Dorsolateral prefrontal cortex (tissue), 120 donors: ENCODE measurements at regions of chr19 and their contacts with region 1.

Region 1: GRCh38 chr19:18588611-18589379 is at the start of gene REX1BD:
- DNase-seq: peak; percentile 54 to 87 (median 74)
- H3K4me3 ChIP-seq: peak within 1 kb of the TSS; percentile 47 to 95 (median 86)
- H3K27ac ChIP-seq: peak within 1 kb of the TSS; percentile 60 to 99 (median 94)
- H3K27me3 ChIP-seq: no peaks in the 10 kb centered on the region
- CTCF ChIP-seq: peak; percentile 73 to 97 (median 92)
- total RNA-seq, gene REX1BD: 49.9 to 127 (median 88.9) TPM

Region 2: DNA sequence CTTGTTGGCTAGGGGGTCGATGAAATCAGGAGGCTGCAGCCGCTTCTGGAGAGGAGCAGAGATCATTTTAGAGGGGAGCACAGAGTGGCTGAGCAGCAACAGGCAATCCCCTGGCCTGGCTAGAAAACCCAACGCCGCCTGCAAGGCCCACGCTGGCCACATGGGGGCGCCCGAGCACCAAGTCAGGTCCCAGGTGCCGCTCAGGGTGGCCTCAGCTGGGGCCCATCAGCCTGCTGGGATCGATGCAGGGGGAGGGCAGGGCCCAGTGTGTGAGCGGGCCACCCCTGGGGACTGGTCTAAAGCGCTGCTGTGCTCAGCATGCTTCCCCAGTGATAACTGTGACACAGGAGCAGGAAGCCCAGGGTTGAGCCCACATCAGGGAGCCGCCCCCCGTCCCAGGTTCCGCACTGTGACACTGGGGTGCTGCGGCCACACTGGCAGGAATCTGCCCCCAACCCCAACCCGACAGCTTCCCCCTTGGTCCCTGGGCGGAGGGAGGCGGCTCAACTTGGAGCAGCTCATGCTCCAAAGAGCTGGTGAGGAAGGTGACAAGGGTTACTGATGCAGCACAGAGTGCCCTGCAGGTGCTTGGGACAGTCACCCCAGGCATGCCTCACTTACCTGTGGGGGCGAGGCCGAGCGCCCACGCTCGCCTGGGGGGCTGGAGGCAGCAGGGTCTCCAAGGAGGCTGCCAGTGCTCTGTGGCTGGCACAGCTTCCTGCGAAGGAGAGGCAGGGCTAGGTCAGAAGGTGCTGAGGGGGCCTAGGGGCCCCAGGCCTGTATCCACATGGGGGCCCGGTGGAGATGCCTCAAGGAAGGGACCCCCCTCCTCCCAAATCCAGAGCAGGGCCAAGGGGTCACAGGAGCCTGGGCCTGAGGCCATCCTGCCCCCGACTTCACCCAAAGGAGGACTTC is 137.6 kb before region 1 on chr19:
- intact Hi-C with region 1: loop called in 1 of 2 experiments (anchors 5 kb)
- DNase-seq: peak; percentile 82 to 97 (median 92)
- H3K4me3 ChIP-seq: peak overlapping the region in 1 of 59 donors; percentile 19
- H3K27ac ChIP-seq: peak overlapping the region in 19 of 59 donors; percentile 1 to 72 (median 36)
- H3K27me3 ChIP-seq: no peaks in the 10 kb centered on the region
- CTCF ChIP-seq: peak; percentile 91 to 99 (median 98)

Region 3: DNA sequence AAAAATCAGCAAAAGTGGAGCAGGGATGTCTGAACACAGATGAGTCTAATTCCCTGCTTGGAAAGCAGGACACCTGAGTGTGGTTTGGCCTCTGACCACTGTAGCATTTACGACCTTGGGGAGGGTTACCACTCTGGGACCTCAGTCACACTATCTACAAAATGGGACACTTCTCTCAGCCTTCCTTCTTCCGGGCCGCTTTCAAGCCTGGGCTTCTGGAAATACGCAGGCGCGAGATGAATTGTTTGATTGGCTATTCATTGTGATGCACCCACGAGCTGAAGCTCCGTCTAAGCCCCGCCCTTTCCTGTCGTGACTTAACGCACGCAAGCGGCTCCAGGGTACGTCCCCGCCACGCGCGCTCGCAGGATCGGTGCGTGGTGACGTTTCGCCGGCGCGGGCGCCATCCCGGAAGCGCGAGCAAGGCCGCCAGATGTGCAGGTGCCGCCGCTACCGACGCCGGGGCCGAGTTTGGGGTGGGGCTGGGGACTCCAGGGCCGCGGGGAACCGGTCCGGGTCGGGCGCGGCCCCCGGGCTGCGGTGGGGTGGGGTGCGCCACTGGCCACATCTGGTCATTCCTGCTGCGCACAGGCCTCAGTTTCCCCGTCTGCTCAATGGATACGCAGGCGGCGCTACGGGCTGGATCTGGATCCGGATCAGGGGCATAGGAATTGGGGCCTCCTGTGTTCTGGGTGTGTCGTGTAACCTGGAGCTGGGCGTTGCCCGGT is 31.2 kb before region 1 on chr19 and contains the start of gene KXD1:
- intact Hi-C with region 1: no loop called
- DNase-seq: peak; percentile 94 to 99 (median 98)
- H3K4me3 ChIP-seq: peak within 1 kb of the TSS; percentile 80 to 99 (median 95)
- H3K27ac ChIP-seq: peak within 1 kb of the TSS; percentile 65 to 97 (median 90)
- H3K27me3 ChIP-seq: no peaks in the 10 kb centered on the region
- CTCF ChIP-seq: peak in 17 of 56 donors; percentile 5 to 48 (median 21)
- total RNA-seq, gene KXD1: 46.5 to 90.8 (median 64.8) TPM

Region 4: DNA sequence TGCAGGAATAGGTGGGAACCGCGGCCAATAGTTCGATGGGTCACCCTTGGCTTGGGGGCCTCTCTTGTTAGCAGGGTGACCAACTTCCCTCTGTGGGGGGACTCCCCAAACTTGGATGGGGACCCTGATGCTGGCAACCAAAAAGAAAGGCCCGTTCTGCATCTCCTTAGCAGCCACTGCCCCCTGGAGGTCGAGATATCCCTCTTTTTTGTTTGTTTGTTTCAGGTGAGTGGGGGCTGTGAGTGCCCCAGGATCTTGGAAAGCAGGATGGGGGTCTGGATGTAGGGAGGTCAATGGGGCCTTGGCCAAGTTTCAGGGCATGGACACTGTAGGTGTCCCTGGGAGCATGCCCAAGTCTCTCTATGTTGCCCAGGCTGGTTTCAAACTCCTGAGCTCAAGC is 87.0 kb after region 1 on chr19:
- intact Hi-C with region 1: loop called (anchors 5 kb)
- DNase-seq: no peak
- H3K4me3 ChIP-seq: no peak overlapping the region
- H3K27ac ChIP-seq: peak overlapping the region in 10 of 59 donors; percentile 22 to 80 (median 71)
- H3K27me3 ChIP-seq: no peaks in the 10 kb centered on the region
- CTCF ChIP-seq: peak in 39 of 56 donors; percentile 12 to 49 (median 26)

Region 5: GRCh38 chr19:18846862-18847548 is 258.2 kb after region 1 on chr19:
- intact Hi-C with region 1: loop called in 1 of 2 experiments (anchors 5 kb)
- DNase-seq: peak; percentile 71 to 91 (median 80)
- H3K4me3 ChIP-seq: peak overlapping the region in 8 of 59 donors; percentile 0 to 19 (median 7)
- H3K27ac ChIP-seq: peak overlapping the region in 53 of 59 donors; percentile 28 to 93 (median 79)
- H3K27me3 ChIP-seq: no peaks in the 10 kb centered on the region
- CTCF ChIP-seq: peak; percentile 54 to 93 (median 83)

Region 6: DNA sequence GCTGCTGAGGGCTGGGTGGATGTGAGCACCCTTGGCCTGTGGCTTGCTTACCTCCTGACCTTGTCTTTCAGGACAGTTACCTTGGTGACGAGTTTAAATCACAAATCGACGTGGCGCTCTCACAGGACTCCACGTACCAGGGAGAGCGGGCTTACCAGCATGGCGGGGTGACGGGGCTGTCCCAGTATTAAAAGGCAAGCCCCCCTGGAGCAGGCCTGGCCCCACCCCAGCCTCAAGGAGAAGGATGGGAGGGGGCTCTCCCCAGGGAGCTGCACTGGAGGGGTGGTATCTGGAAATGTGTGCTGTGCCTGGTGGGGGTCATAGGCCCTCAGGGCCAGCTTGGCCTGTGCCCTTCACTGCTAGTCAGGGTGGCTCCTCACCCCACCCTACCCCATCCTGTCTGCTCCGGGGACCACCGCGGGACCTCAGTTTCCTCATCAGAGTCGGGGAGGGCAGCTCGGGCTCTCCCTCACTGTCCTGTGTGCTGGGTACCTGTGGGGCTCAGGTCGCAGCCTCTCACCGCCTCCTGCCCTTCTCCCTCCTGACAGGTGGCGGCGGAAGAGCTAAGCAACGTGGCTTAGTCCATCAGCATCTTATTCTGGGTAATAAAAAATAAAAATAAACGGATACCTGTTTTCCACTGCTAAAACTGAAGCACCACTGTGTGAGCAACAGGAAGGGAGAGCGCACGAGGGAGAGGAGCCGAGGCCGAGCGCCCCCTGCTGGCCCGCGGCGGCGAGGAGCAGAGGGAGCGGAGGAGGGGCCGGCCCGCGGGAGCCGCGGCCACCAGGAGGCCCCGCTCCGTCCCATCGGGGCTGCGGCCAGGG is 277.4 kb after region 1 on chr19:
- intact Hi-C with region 1: loop called in 1 of 2 experiments (anchors 5 kb)
- DNase-seq: peak in 8 of 10 donors; percentile 54 to 84 (median 64)
- H3K4me3 ChIP-seq: peak overlapping the region in 2 of 59 donors; percentile 1 to 12
- H3K27ac ChIP-seq: peak overlapping the region in 43 of 59 donors; percentile 2 to 71 (median 50)
- H3K27me3 ChIP-seq: peaks cover 0 to 3% (median 0%) of the 10 kb centered on the region in 45 donors
- CTCF ChIP-seq: peak; percentile 82 to 100 (median 98)

Region 7: GRCh38 chr19:18906605-18907519 is 318.1 kb after region 1 on chr19:
- intact Hi-C with region 1: loop called in 1 of 2 experiments (anchors 5 kb)
- DNase-seq: peak; percentile 41 to 90 (median 84)
- H3K4me3 ChIP-seq: peak overlapping the region in 10 of 59 donors; percentile 1 to 35 (median 12)
- H3K27ac ChIP-seq: peak overlapping the region; percentile 46 to 96 (median 87)
- H3K27me3 ChIP-seq: no peaks in the 10 kb centered on the region
- CTCF ChIP-seq: peak in 7 of 56 donors; percentile 7 to 23 (median 17)

Region 8: DNA sequence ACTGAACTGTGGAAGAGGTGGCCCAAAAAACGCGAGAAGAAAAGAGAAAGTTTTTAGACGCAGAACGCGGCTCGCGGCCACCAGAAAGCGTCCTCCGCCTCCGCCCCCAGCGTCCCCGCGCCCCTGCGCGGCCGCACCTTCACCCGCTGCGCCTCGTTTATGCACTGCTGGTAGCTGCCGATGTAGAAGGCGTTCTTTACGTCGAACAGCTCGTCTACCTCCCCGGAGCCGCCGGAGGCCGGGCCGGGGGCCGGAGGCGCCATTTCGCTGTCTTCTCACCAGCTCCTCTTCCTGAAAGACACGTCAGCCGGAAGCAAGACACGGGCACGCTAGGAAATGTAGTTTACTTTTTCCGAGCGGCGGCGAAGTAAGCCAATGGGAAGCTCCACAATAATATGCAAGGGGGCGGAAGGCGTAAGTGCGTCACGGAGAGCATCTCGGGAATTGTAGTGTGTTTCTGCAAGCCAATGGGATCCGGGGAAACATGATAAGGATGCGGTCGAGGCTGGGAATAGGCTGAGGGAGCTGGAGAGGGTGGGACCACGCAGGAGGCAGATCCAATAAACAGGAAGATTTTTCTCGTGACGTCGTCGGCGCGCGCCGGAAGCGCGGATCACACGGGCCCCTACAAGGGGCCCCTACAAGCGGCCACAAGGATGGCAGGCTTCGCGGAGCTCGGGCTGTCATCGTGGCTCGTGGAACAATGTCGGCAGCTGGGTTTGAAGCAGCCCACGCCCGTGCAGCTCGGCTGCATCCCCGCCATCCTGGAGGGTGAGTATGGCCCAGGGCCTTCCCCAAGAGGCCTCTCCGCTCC is 330.5 kb after region 1 on chr19 and contains the starts of genes COPE and DDX49:
- intact Hi-C with region 1: loop called in 1 of 2 experiments (anchors 5 kb)
- DNase-seq: peak; percentile 97 to 100 (median 99)
- H3K4me3 ChIP-seq: peak within 1 kb of the TSS; percentile 65 to 100 (median 96)
- H3K27ac ChIP-seq: peak within 1 kb of the TSS in 56 of 59 donors; percentile 11 to 95 (median 84)
- H3K27me3 ChIP-seq: no peaks in the 10 kb centered on the region
- CTCF ChIP-seq: peak in 41 of 56 donors; percentile 3 to 62 (median 28)
- total RNA-seq, gene COPE: 108 to 189 (median 147) TPM
- total RNA-seq, gene DDX49: 28.5 to 56.4 (median 38.5) TPM